ENCODE measurements at regions of chr17 and their contacts with region 1.

Region 1: GRCh38 chr17:979538-980405 is at the start of gene NXN:
- DNase-seq: peak; percentile 72 to 96 (median 83)
- ATAC-seq: peak; percentile 99
- H3K4me3 ChIP-seq: peak within 1 kb of the TSS; percentile 50
- H3K4me3 Mint-ChIP-seq: peak within 1 kb of the TSS; percentile 64 to 88 (median 80)
- H3K27ac ChIP-seq: peak within 1 kb of the TSS; percentile 56
- H3K27ac Mint-ChIP-seq: peak within 1 kb of the TSS in 7 of 9 donors; percentile 72 to 88 (median 79)
- H3K4me1 ChIP-seq: peaks cover 8 to 19% of the 10 kb centered on the region in 2 donors
- H3K4me1 Mint-ChIP-seq: peaks cover 13 to 20% (median 15%) of the 10 kb centered on the region in 7 donors
- H3K27me3 ChIP-seq: peaks cover 6 to 11% of the 10 kb centered on the region in 2 donors
- H3K27me3 Mint-ChIP-seq: peaks cover 27 to 42% (median 34%) of the 10 kb centered on the region in 5 donors
- total RNA-seq, gene NXN: 0.10 to 0.84 (median 0.36) TPM in 4 of 5 experiments, not detected in the other

Region 2: GRCh38 chr17:716238-716637 is 263.5 kb before region 1 on chr17:
- CTCF ChIA-PET with region 1: interaction called, 5 read pairs
- POLR2A ChIA-PET with region 1: no interaction called
- intact Hi-C with region 1: loop called (anchors 1 kb)
- DNase-seq: no peak
- ATAC-seq: no peak
- H3K4me3 ChIP-seq: no peak overlapping the region
- H3K4me3 Mint-ChIP-seq: peak overlapping the region in 4 of 10 donors; percentile 35 to 80 (median 60)
- H3K27ac ChIP-seq: no peak overlapping the region
- H3K27ac Mint-ChIP-seq: no peak overlapping the region
- H3K4me1 ChIP-seq: peaks cover 10 to 12% of the 10 kb centered on the region in 2 donors
- H3K4me1 Mint-ChIP-seq: peaks cover 21 to 35% (median 28%) of the 10 kb centered on the region in 7 donors
- H3K27me3 ChIP-seq: no peaks in the 10 kb centered on the region
- H3K27me3 Mint-ChIP-seq: peaks cover 0 to 2% (median 0%) of the 10 kb centered on the region in 5 donors

Region 3: GRCh38 chr17:752002-752619 is 227.7 kb before region 1 on chr17 and contains the start of gene GEMIN4:
- CTCF ChIA-PET with region 1: interaction called, 3 read pairs
- POLR2A ChIA-PET with region 1: interaction called, 3 read pairs
- intact Hi-C with region 1: loop called in 1 of 2 experiments (anchors 1 kb)
- DNase-seq: peak; percentile 92 to 100 (median 98)
- ATAC-seq: peak; percentile 96
- H3K4me3 ChIP-seq: peak within 1 kb of the TSS; percentile 80
- H3K4me3 Mint-ChIP-seq: peak within 1 kb of the TSS; percentile 90 to 97 (median 96)
- H3K27ac ChIP-seq: peak within 1 kb of the TSS; percentile 81
- H3K27ac Mint-ChIP-seq: peak within 1 kb of the TSS; percentile 88 to 98 (median 96)
- H3K4me1 ChIP-seq: peaks cover 15 to 22% of the 10 kb centered on the region in 2 donors
- H3K4me1 Mint-ChIP-seq: peaks cover 32 to 43% (median 40%) of the 10 kb centered on the region in 7 donors
- H3K27me3 ChIP-seq: no peaks in the 10 kb centered on the region
- H3K27me3 Mint-ChIP-seq: no peaks in the 10 kb centered on the region
- total RNA-seq, gene GEMIN4: 15.5 to 35.0 (median 28.9) TPM

Region 4: GRCh38 chr17:794876-795275 is 184.9 kb before region 1 on chr17:
- CTCF ChIA-PET with region 1: interaction called, 5 read pairs
- POLR2A ChIA-PET with region 1: interaction called, 5 read pairs
- intact Hi-C with region 1: loop called in 1 of 2 experiments (anchors 1 kb)
- DNase-seq: peak in 8 of 9 donors; percentile 19 to 42 (median 35)
- ATAC-seq: peak; percentile 74
- H3K4me3 ChIP-seq: no peak overlapping the region
- H3K4me3 Mint-ChIP-seq: peak overlapping the region in 1 of 10 donors; percentile 57
- H3K27ac ChIP-seq: no peak overlapping the region
- H3K27ac Mint-ChIP-seq: peak overlapping the region in 5 of 9 donors; percentile 14 to 79 (median 56)
- H3K4me1 ChIP-seq: peaks cover 2 to 6% of the 10 kb centered on the region in 2 donors
- H3K4me1 Mint-ChIP-seq: peaks cover 3 to 11% (median 7%) of the 10 kb centered on the region in 7 donors
- H3K27me3 ChIP-seq: no peaks in the 10 kb centered on the region
- H3K27me3 Mint-ChIP-seq: no peaks in the 10 kb centered on the region

Region 5: DNA sequence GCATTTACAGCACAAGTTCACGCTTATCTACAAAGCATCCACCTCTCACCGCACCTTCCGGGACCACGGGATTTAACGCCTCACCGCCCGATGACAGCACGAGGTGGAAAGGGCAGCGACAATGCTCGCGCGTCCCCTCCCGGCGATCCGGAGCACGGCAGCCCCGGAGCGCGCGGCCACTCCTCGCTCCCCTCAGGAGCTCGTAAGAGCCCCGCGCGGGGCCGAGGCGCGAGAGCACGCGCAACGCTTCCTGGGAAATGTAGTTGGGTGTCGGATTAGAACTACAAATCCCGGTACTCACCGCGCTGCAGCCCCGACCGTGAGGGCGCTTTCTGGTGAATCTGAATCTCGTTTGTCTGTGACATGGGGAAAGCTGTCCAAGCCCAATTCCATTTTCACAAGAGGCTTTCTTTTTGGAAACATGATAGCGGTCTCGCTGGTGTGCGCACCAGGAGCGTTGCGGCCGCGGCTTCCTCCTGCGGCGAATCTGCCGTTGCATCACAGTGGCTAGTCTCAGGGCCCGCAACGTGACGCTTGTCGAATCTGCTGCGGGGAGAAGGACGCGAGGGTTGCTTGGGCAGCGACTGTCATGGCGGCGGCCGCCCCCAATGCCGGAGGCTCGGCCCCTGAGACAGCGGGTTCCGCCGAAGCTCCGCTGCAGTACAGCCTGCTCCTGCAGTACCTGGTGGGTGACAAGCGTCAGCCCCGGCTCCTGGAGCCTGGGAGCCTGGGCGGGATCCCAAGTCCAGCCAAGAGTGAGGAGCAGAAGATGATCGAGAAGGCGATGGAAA is 17.0 kb after region 1 on chr17 and contains the start of gene TIMM22:
- CTCF ChIA-PET with region 1: interaction called, 35 read pairs
- POLR2A ChIA-PET with region 1: interaction called, 25 read pairs
- intact Hi-C with region 1: loop called (anchors 1 kb)
- DNase-seq: peak; percentile 85 to 97 (median 93)
- ATAC-seq: peak; percentile 97
- H3K4me3 ChIP-seq: peak within 1 kb of the TSS; percentile 98
- H3K4me3 Mint-ChIP-seq: peak within 1 kb of the TSS; percentile 96 to 100 (median 98)
- H3K27ac ChIP-seq: peak within 1 kb of the TSS; percentile 87
- H3K27ac Mint-ChIP-seq: peak within 1 kb of the TSS; percentile 96 to 99 (median 98)
- H3K4me1 ChIP-seq: peaks cover 14 to 16% of the 10 kb centered on the region in 2 donors
- H3K4me1 Mint-ChIP-seq: peaks cover 13 to 32% (median 24%) of the 10 kb centered on the region in 7 donors
- H3K27me3 ChIP-seq: no peaks in the 10 kb centered on the region
- H3K27me3 Mint-ChIP-seq: peaks cover 0 to 2% (median 0%) of the 10 kb centered on the region in 5 donors
- total RNA-seq, gene TIMM22: 8.3 to 13.5 (median 11.3) TPM

Region 6: DNA sequence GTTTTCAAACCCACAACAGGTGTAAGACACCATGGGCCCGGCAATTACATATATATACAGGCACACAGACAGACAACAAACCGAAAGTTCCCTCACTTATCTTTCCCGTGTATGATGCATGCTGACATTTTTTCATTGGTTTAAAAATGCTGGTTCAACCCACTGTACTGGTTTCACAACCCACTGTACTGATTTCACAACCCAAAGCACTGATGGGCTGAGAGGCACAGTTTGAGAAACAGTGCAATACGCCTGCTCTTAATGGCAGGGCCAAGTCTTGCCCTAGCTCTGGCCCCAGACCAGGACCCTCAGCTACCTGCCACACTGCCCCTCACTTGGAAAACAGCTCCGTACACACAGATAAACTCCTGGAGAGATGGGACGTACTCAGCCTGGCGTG is 118.6 kb after region 1 on chr17:
- CTCF ChIA-PET with region 1: no interaction called
- POLR2A ChIA-PET with region 1: no interaction called
- intact Hi-C with region 1: no loop called
- DNase-seq: no peak
- ATAC-seq: peak; percentile 60
- H3K4me3 ChIP-seq: no peak overlapping the region
- H3K4me3 Mint-ChIP-seq: no peak overlapping the region
- H3K27ac ChIP-seq: no peak overlapping the region
- H3K27ac Mint-ChIP-seq: peak overlapping the region in 4 of 9 donors; percentile 28 to 64 (median 56)
- H3K4me1 ChIP-seq: peaks cover 0 to 15% of the 10 kb centered on the region in 2 donors
- H3K4me1 Mint-ChIP-seq: peaks cover 17 to 40% (median 36%) of the 10 kb centered on the region in 7 donors
- H3K27me3 ChIP-seq: no peaks in the 10 kb centered on the region
- H3K27me3 Mint-ChIP-seq: no peaks in the 10 kb centered on the region

Region 7: DNA sequence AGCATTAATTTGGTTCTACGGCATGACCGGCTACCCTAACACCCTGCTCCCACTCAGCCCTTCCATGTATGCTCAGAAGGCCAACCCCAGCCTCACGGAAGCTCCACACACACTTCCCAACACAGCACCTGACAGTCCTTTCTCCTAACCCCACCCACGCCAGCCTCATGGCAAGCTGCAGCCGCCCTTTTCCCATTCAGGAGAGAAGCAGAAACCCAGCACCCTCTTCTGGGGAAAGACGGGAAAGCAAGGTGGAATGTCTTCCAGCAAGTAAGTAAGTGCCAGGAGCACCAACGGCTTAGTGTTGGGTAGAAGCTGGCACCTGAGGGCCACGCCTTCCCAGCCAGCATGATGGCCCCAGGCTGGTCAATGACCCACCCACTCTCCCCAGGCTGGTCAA is 167.9 kb after region 1 on chr17:
- CTCF ChIA-PET with region 1: no interaction called
- POLR2A ChIA-PET with region 1: no interaction called
- intact Hi-C with region 1: no loop called
- DNase-seq: no peak
- ATAC-seq: no peak
- H3K4me3 ChIP-seq: no peak overlapping the region
- H3K4me3 Mint-ChIP-seq: no peak overlapping the region
- H3K27ac ChIP-seq: no peak overlapping the region
- H3K27ac Mint-ChIP-seq: no peak overlapping the region
- H3K4me1 ChIP-seq: no peaks in the 10 kb centered on the region
- H3K4me1 Mint-ChIP-seq: no peaks in the 10 kb centered on the region
- H3K27me3 ChIP-seq: no peaks in the 10 kb centered on the region
- H3K27me3 Mint-ChIP-seq: no peaks in the 10 kb centered on the region

Measured in naive thymus-derived CD4-positive, alpha-beta T cell (primary cell).